Activated T-helper 1 cell treated with anti-CD3 and anti-CD28 coated beads, Interleukin-12 subunit alpha, Interleukin-12 subunit beta, Interleukin-2, Interleukin-4 antibody, amounts not matched to agents 30 ng/mL and 10 ng/mL and 1 ng/mL, durations not matched to agents 14 hours and 24 hours and 36 hours (primary cell): ENCODE measurements at regions of chr12 and their contacts with region 1.

Region 1: DNA sequence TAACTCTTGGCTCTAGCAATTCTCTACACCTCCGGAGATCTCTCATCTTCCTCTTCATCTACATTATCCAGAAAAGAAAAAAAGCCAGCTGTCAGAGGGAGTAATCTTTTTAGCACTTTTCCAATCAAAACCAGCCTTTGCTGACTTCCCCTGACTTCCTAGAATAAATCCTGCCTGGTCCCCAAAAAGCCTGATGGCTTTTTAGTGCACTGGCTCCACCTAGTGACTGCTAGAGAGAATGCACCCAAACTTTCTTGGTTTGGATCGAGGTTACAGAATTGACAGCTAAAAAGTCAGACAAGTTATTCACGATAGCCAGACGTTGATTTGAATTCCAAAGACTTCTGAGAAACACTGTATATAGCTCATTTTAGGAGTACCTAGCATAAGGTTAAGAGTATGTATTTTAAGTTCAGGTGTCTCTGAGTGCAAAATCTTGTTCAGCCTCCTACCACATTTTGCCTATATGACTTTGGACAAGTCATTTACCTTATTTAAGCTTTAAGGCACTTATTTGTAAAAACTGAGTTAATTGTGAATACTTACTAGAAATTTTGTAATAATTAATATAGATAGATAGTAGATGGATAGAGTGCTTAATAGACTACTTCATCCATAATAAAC is 185.7 kb upstream of the GRIN2B start:
- DNase-seq: peak; percentile 8
- H3K4me3 Mint-ChIP-seq: no peak overlapping the region
- H3K27ac Mint-ChIP-seq: no peak overlapping the region
- H3K4me1 Mint-ChIP-seq: no peaks in the 10 kb centered on the region
- H3K27me3 Mint-ChIP-seq: peaks cover 5% of the 10 kb centered on the region

Region 2: DNA sequence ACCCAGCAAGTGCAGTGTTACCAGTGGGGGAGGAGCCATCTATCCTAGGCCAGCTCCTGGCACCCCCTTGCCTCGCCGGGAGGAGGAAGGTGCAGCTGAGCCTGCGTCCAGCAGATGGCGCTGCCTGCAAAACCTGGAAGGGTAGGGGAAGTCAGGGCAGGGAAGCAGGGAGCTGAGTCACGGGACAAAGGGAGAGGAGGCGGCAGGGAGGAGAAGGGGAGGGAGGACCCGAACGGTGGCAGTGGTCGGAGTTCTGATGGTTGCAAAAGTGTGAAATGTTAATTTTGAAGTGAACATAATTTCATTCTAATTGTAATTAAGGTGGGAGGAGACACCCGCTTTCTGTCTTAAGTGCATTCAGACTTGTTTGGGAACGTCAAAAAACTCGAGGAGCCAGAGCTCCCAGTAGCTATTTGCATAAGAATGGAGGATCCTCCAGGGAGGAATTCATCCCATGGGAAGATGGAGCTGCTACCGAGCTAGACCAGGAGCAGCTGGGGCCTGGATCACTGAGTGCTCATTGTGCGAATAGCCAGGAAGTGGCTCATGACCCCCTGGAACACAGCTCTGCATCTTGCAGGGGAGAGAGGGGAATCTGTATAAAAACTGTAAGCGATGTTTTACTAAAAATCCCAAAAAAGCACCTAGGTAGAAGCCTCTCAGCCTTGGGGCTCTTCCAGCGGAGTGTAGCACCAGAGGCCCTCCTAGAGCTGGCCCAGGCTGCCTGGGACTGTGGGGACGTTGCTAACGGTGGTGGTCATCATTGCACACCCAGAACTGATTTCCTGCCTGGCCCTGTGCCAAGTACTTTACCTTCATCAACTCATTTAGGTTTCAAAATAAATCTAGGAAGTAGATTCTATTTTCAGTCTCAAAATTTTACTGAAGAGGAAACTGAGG is 911.1 kb before region 1 on chr12:
- intact Hi-C with region 1: loop called (anchors 2 kb)
- DNase-seq: peak; percentile 60
- H3K4me3 Mint-ChIP-seq: no peak overlapping the region
- H3K27ac Mint-ChIP-seq: no peak overlapping the region
- H3K4me1 Mint-ChIP-seq: peaks cover 5% of the 10 kb centered on the region
- H3K27me3 Mint-ChIP-seq: peaks cover 10% of the 10 kb centered on the region

Region 3: DNA sequence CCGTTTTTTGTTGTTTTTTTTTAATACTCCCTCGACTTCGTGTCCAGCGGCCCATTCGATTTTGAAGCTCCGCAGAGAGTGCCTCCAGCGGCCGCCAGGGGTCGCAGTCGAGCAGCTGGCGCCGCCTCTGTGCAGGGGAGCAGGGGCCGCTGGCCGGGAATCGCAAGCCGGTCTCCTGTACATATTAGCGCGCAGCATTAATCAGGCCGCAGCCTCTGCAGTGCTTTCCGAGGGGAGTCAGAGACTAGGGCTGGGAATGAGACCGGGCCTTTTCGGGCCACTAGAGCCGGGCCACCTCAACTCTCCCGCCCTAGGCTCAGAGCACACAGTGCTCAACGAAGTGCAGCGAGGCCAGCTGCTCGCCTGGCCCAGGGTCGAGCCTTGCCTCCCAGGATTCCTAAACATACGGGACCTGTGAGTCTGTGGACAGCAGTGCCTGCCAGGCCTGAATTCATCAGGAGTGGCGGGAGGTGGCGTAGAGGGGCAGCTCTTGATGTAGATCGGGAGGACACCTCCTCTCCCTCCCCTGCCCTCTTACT is 888.8 kb before region 1 on chr12:
- intact Hi-C with region 1: loop called (anchors 5 kb)
- DNase-seq: peak; percentile 32
- H3K4me3 Mint-ChIP-seq: no peak overlapping the region
- H3K27ac Mint-ChIP-seq: no peak overlapping the region
- H3K4me1 Mint-ChIP-seq: no peaks in the 10 kb centered on the region
- H3K27me3 Mint-ChIP-seq: peaks cover 18% of the 10 kb centered on the region

Region 4: DNA sequence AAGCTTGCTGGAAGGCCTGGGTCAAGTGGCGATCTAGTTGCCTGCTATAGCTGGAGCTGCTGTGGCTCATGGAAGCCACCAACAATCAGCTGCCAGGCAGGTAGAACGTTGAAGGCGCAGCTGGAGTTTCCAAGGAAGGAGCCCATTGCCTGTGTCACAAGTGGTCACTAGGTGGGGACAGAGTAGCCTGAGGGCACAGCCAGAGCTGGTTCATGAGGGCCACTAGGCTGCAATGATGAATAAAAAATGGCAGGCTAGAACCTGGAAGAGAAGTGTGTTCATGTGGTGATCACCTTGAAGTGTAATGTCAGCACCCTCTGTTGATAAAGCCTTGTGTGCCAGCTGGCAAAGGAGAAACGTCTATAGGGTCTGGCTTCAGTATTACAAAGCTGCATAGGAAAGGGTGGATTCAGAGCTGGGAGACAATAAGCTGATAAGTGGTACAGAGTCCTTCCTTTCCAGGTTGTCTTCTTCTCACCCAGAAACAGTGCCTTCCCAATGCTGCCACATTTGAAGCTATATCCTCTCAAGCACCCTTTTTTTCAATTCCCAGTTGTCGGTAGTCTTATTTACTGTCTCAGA is 804.8 kb before region 1 on chr12:
- intact Hi-C with region 1: loop called (anchors 2 kb)
- DNase-seq: no peak
- H3K4me3 Mint-ChIP-seq: no peak overlapping the region
- H3K27ac Mint-ChIP-seq: no peak overlapping the region
- H3K4me1 Mint-ChIP-seq: no peaks in the 10 kb centered on the region
- H3K27me3 Mint-ChIP-seq: peaks cover 22% of the 10 kb centered on the region

Region 5: DNA sequence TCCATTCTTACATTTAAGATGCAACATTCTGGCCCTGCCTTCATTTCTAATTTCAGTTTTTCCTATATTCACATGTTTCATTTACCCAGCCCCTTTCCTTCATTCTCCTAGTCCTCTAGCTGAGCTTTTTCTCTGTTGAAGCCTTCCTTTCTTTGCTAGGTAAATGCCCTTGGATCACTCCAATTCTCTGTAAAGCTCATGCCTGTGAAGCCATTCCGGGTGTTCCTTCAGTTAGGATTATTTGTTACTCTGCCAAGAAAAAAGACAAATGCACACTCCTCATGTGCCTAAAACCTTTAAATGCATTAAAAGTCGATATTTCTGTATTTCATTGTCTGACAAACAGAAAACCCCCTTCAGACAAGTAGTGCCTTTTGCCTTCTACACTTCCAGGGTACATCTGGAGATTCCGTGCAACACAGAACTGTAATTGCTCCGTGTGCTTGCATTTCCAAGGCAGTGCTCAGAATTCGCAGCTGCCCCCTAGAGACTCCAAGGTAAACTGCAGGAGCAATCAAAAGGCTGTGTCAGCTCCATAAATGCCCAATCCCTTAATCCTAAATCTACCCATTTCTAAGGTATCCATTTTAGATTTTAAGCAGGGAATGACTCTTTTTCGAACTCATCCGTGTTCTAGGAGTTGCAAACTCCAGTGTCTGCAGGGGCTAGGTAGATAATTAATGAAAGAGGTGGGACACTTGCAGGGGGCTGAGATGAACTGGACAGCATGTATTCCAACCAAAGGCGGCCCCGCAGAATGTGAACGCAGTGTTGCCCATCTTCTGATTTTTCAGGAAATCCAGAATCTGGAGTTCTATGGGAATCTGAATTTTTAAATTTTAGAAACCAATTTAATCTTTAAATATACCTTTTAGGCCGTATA is 505.9 kb before region 1 on chr12:
- intact Hi-C with region 1: loop called (anchors 10 kb)
- DNase-seq: no peak
- H3K4me3 Mint-ChIP-seq: no peak overlapping the region
- H3K27ac Mint-ChIP-seq: no peak overlapping the region
- H3K4me1 Mint-ChIP-seq: no peaks in the 10 kb centered on the region
- H3K27me3 Mint-ChIP-seq: peaks cover 6% of the 10 kb centered on the region

Region 6: DNA sequence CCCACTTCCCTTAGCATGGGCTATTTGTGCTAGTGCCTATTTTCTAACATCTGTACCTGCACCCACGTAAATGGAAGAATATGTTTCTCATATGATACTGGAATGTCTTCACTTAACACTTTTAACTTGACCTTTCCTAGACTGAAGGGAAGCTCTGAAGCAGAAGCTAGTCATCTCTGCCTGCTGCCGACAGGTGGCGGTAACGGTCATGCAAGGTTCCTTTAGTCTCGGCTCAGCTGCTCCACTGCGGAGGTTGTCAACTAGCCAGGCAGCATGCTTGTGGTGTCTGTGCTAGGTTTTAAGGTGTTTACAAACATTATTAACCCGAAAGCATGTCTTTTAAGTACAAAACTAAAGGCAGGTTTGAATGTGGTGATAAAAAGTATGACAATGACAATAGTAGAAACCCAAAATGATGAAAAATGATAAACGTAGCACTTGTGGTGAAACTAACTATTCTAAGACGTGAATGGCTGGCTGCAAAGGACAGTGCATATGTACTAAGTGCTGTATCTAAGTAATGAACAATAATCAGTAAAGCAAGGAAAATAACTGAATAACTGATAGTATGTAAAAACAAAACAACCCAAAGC is 302.9 kb before region 1 on chr12:
- intact Hi-C with region 1: loop called (anchors 1 kb)
- DNase-seq: peak; percentile 11
- H3K4me3 Mint-ChIP-seq: no peak overlapping the region
- H3K27ac Mint-ChIP-seq: no peak overlapping the region
- H3K4me1 Mint-ChIP-seq: no peaks in the 10 kb centered on the region
- H3K27me3 Mint-ChIP-seq: peaks cover 5% of the 10 kb centered on the region

Region 7: DNA sequence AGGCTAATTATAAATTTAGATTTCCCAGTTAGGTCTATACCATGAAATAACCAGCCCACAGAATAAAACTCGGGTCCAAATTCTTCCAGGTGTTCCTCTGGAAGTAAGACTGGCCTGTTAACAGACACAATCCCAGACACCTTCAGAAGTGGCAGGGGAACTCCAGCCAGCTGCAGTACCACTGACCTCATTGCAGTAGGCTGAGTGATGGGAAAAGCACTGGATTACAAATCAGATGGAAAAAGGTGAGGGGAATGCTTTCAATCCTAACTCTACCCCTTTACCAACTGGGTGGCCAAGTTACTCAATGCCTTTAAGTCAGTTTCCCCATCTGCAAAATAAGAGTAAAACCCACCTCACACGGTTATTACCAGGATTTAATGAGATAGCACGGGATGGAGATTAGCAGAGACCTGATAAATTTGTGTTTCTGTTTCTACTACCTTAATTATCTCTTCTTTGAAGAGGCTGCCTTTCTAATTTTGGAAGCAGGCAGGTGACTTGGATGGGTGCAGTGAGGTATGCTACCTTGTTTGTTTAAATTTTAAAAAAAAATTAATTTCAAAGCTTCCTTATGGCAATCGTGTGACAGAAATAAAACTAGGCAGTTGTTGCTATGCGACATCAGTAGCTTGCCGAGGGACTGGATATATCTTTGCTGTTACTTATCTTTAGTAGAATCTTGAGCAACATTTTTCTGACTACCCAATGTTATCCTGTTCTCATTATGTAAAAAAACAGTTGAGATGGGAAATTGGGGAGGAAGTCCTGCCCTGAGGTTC is 18.4 kb before region 1 on chr12:
- intact Hi-C with region 1: no loop called
- DNase-seq: no peak
- H3K4me3 Mint-ChIP-seq: no peak overlapping the region
- H3K27ac Mint-ChIP-seq: no peak overlapping the region
- H3K4me1 Mint-ChIP-seq: no peaks in the 10 kb centered on the region
- H3K27me3 Mint-ChIP-seq: peaks cover 2% of the 10 kb centered on the region